Natural killer cell (primary cell): ENCODE measurements at regions of chr19 and their contacts with region 1.

Region 1: DNA sequence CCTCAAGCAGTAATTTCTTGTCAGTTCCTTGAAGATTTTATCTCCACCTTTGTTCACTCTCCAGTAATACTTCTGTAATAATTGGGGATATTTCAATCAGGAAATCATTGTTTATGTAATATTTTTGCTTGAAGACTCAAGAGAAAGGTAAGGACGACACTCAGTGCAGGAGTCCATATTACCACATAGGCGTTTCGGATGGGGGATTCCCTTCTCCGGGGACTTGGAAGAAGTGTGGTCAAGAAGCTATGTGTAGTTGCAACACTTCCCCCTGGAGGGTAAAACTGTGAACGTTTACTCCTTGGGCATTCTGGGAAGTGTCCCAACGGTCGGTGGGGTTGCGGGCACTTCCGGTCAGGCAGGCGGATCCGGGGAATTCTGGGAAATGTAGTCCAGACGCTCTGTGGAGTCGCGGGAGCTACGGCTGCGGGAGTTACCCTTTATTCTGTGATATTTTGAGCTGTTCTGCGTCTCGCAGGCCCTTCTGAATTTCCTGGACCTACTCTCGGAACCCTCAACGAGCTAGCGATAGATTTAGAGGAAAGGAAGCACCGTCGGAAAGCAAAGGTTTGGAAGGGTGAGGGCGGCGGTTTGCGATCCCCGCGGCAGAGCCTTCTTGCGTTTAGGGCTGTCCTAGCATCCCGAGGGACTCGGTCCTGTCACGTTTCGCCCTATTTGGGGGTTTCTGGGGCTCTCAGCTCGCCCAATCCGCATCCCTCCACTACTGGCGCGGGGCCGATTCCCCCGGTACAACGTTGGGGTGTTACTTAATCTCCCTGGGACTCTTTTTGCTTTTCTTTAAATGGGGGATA is at the start of gene ZNF221:
- DNase-seq: peak; percentile 44 to 78
- ATAC-seq: peak; percentile 74 to 91 (median 86)
- H3K4me3 ChIP-seq: peak within 1 kb of the TSS; percentile 70
- H3K4me3 Mint-ChIP-seq: peak within 1 kb of the TSS; percentile 99
- H3K27ac ChIP-seq: peak within 1 kb of the TSS; percentile 55
- H3K27ac Mint-ChIP-seq: peak within 1 kb of the TSS; percentile 88 to 90
- H3K4me1 ChIP-seq: peaks cover 8% of the 10 kb centered on the region
- H3K4me1 Mint-ChIP-seq: peaks cover 9 to 14% of the 10 kb centered on the region in 2 donors
- H3K27me3 ChIP-seq: peaks cover 4% of the 10 kb centered on the region
- H3K27me3 Mint-ChIP-seq: peaks cover 33 to 40% of the 10 kb centered on the region in 2 donors
- CTCF ChIP-seq: no peak
- total RNA-seq, gene ZNF221: 1.9 to 2.7 (median 2.2) TPM

Region 2: DNA sequence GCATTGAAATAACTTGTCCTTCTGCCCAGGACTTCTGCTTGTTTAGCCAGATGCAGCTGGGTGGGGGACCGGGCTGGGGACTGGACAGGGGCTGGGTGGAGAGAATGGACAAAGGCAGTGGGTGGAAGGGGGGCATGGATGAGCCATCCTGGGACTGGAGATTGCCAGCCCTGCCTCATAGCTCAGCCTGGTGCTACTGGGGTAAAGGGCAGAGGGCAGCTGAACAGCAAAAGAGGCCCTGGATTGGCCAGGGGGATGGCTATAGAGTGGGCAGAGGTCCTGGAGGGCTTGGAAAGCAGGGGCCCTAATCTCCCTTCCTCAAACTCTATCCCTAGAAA is 263.4 kb before region 1 on chr19:
- intact Hi-C with region 1: no loop called
- DNase-seq: no peak
- ATAC-seq: no peak
- H3K4me3 ChIP-seq: no peak overlapping the region
- H3K4me3 Mint-ChIP-seq: no peak overlapping the region
- H3K27ac ChIP-seq: no peak overlapping the region
- H3K27ac Mint-ChIP-seq: no peak overlapping the region
- H3K4me1 ChIP-seq: no peaks in the 10 kb centered on the region
- H3K4me1 Mint-ChIP-seq: no peaks in the 10 kb centered on the region
- H3K27me3 ChIP-seq: no peaks in the 10 kb centered on the region
- H3K27me3 Mint-ChIP-seq: peaks cover 0 to 2% of the 10 kb centered on the region in 2 donors
- CTCF ChIP-seq: no peak

Region 3: GRCh38 chr19:43934985-43935708 is 15.9 kb before region 1 on chr19 and contains the start of gene ZNF45:
- intact Hi-C with region 1: loop called (anchors 1 kb)
- DNase-seq: peak; percentile 77 to 94
- ATAC-seq: peak; percentile 96 to 98 (median 98)
- H3K4me3 ChIP-seq: peak within 1 kb of the TSS; percentile 60
- H3K4me3 Mint-ChIP-seq: peak within 1 kb of the TSS; percentile 92
- H3K27ac ChIP-seq: peak within 1 kb of the TSS; percentile 58
- H3K27ac Mint-ChIP-seq: peak within 1 kb of the TSS; percentile 82 to 89
- H3K4me1 ChIP-seq: peaks cover 11% of the 10 kb centered on the region
- H3K4me1 Mint-ChIP-seq: peaks cover 18 to 21% of the 10 kb centered on the region in 2 donors
- H3K27me3 ChIP-seq: peaks cover 3% of the 10 kb centered on the region
- H3K27me3 Mint-ChIP-seq: peaks cover 15 to 16% of the 10 kb centered on the region in 2 donors
- CTCF ChIP-seq: no peak
- total RNA-seq, gene ZNF45: 10.6 to 24.3 (median 14.5) TPM